CD4-positive, alpha-beta T cell (primary cell): ENCODE measurements at regions of chr17 and their contacts with region 1.

Region 1: DNA sequence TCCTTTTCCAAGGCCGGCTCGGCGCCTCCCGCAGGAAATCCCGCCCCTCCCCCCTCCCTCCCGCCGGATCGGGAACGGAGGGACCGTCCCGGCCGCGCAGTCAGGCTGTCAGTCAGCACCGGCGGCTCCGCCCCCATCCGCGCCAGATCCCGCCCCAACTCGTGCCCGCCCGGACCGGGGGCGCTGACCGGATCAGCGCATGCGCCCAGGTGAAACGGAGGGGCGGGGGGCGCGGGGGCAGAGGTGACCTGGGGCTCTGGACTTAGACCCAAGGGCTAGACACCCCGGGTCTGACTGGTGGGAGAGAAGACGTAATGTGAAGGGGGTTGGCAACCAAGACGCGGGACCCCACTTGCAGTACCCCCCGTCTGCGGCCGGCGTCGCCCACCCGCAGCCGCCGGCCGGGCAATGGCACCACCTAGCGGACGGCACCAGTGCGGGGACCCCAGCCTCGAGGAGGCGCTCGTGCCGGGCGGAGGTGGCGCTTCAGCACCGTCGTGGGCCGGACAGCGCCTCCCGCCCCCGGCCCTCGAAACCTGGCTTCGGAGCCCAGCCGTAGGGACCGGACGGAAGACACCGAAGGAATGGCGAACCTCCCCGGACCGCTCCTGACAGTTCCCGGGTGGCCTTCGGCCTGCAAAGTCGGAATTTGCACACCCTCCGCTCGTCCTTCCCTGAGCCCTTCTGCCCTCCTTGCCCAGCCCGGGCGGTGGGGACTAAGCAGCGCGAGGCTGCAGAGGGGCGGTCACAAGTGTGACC is at the start of gene CASKIN2:
- DNase-seq: peak; percentile 49 to 89 (median 64)
- ATAC-seq: peak; percentile 52
- H3K4me3 ChIP-seq: peak within 1 kb of the TSS; percentile 80
- H3K4me3 Mint-ChIP-seq: peak within 1 kb of the TSS; percentile 86
- H3K27ac ChIP-seq: no peak within 1 kb of the TSS
- H3K27ac Mint-ChIP-seq: peak within 1 kb of the TSS; percentile 47
- H3K4me1 ChIP-seq: peaks cover 44% of the 10 kb centered on the region
- H3K4me1 Mint-ChIP-seq: peaks cover 27% of the 10 kb centered on the region
- H3K27me3 ChIP-seq: peaks cover 9 to 10% of the 10 kb centered on the region in 2 experiments
- H3K27me3 Mint-ChIP-seq: no peaks in the 10 kb centered on the region
- CTCF ChIP-seq: peak; percentile 88
- total RNA-seq, gene CASKIN2: 0.17 to 0.25 TPM

Region 2: DNA sequence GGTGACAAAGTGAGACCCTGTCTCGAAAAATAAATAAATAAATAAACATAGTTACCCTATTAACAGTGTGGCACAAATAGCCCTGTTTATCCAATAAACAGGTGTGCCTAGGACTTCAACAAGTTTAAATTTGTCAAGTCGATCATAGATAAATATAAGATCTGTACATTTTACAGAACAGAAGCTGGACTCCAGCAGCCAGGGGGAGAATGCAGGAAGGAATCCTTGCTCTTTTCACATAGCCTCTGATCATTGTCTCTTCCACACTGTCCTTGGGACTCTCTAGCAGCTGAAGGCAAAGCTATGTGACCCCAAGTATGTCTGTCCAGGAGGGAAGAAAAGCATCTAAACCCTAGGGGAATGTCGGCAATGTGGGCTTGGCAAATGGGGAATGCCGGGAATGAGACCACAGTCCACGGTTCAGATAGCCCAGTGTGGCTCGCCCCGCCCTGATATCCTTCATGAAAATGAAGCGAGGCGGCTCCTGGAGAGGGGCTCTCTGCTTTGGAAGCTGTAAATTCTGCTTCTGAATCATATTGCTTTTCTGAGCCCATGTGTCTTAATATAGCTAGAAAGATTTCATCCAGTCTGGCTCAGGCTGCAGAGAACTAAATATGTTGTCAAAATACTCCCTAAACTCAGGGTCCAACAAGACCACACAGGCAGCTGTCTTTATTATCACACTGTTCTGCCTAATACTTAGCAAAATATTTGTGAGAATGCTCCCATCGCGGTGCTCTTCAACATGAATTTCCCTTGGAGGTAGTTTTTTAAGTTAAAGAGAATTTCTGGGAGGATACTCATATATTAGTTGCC is 85.3 kb before region 1 on chr17:
- CTCF ChIA-PET with region 1: interaction called, 3 read pairs
- POLR2A ChIA-PET with region 1: interaction called, 4 read pairs
- intact Hi-C with region 1: loop called (anchors 1 to 2 kb)
- DNase-seq: no peak
- ATAC-seq: no peak
- H3K4me3 ChIP-seq: no peak overlapping the region
- H3K4me3 Mint-ChIP-seq: no peak overlapping the region
- H3K27ac ChIP-seq: no peak overlapping the region
- H3K27ac Mint-ChIP-seq: no peak overlapping the region
- H3K4me1 ChIP-seq: peaks cover 12% of the 10 kb centered on the region
- H3K4me1 Mint-ChIP-seq: peaks cover 16% of the 10 kb centered on the region
- H3K27me3 ChIP-seq: no peaks in the 10 kb centered on the region
- H3K27me3 Mint-ChIP-seq: peaks cover 6% of the 10 kb centered on the region
- CTCF ChIP-seq: no peak

Region 3: DNA sequence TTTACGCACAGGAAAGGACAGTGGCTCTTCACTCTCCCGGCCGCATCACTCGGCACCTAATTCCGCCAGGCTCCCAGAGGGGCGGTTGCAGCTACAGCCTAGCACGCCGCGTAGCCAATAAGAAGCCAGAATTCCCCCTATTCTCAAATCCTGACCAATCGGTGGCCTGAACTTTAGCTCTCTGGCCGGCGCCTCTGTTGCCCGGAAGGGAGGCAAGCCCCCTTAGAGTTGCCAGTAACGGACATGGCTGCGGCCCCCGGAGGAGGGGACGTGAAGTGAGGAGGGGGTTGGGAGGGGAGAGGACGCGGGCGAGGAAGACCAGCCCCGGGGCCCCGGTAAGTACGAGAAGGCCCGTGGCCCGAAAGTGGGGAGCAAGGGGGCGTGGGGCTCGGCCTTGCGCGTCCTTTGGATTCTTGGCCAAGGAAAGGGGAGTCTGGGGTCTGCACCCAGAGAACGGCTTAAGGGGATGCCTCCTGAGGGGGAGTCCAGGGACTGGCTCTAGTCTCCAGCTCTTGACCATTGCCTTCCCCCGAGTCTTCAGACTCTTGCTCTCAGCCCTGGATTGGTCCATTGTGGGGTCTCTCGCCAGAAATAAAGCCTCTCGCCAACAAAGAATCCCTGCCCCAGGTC is 59.1 kb before region 1 on chr17 and contains the start of gene TMEM94:
- CTCF ChIA-PET with region 1: interaction called, 4 read pairs
- POLR2A ChIA-PET with region 1: interaction called, 34 read pairs
- intact Hi-C with region 1: loop called in 1 of 2 experiments (anchors 2 kb)
- DNase-seq: peak; percentile 79 to 97 (median 88)
- ATAC-seq: peak; percentile 96
- H3K4me3 ChIP-seq: peak within 1 kb of the TSS; percentile 70
- H3K4me3 Mint-ChIP-seq: peak within 1 kb of the TSS; percentile 100
- H3K27ac ChIP-seq: peak within 1 kb of the TSS; percentile 23 to 59
- H3K27ac Mint-ChIP-seq: peak within 1 kb of the TSS; percentile 91
- H3K4me1 ChIP-seq: peaks cover 17% of the 10 kb centered on the region
- H3K4me1 Mint-ChIP-seq: peaks cover 29% of the 10 kb centered on the region
- H3K27me3 ChIP-seq: no peaks in the 10 kb centered on the region
- H3K27me3 Mint-ChIP-seq: no peaks in the 10 kb centered on the region
- CTCF ChIP-seq: no peak
- total RNA-seq, gene TMEM94: 52.8 to 57.3 TPM

Region 4: GRCh38 chr17:75487351-75488070 is 28.2 kb before region 1 on chr17:
- CTCF ChIA-PET with region 1: no interaction called
- POLR2A ChIA-PET with region 1: interaction called, 23 read pairs
- intact Hi-C with region 1: no loop called
- DNase-seq: peak in 13 of 14 experiments; percentile 6 to 81 (median 51)
- ATAC-seq: peak; percentile 96
- H3K4me3 ChIP-seq: peak overlapping the region; percentile 20
- H3K4me3 Mint-ChIP-seq: peak overlapping the region; percentile 76
- H3K27ac ChIP-seq: peak overlapping the region; percentile 55 to 65
- H3K27ac Mint-ChIP-seq: peak overlapping the region; percentile 95
- H3K4me1 ChIP-seq: peaks cover 30% of the 10 kb centered on the region
- H3K4me1 Mint-ChIP-seq: peaks cover 26% of the 10 kb centered on the region
- H3K27me3 ChIP-seq: no peaks in the 10 kb centered on the region
- H3K27me3 Mint-ChIP-seq: no peaks in the 10 kb centered on the region
- CTCF ChIP-seq: no peak

Region 5: GRCh38 chr17:75535119-75535537 is 19.5 kb after region 1 on chr17:
- CTCF ChIA-PET with region 1: no interaction called
- POLR2A ChIA-PET with region 1: interaction called, 15 read pairs
- intact Hi-C with region 1: no loop called
- DNase-seq: peak in 13 of 14 experiments; percentile 31 to 87 (median 48)
- ATAC-seq: peak; percentile 96
- H3K4me3 ChIP-seq: peak overlapping the region; percentile 25
- H3K4me3 Mint-ChIP-seq: peak overlapping the region; percentile 38
- H3K27ac ChIP-seq: peak overlapping the region; percentile 35 to 71
- H3K27ac Mint-ChIP-seq: peak overlapping the region; percentile 87
- H3K4me1 ChIP-seq: peaks cover 25% of the 10 kb centered on the region
- H3K4me1 Mint-ChIP-seq: peaks cover 26% of the 10 kb centered on the region
- H3K27me3 ChIP-seq: no peaks in the 10 kb centered on the region
- H3K27me3 Mint-ChIP-seq: no peaks in the 10 kb centered on the region
- CTCF ChIP-seq: no peak

Region 6: DNA sequence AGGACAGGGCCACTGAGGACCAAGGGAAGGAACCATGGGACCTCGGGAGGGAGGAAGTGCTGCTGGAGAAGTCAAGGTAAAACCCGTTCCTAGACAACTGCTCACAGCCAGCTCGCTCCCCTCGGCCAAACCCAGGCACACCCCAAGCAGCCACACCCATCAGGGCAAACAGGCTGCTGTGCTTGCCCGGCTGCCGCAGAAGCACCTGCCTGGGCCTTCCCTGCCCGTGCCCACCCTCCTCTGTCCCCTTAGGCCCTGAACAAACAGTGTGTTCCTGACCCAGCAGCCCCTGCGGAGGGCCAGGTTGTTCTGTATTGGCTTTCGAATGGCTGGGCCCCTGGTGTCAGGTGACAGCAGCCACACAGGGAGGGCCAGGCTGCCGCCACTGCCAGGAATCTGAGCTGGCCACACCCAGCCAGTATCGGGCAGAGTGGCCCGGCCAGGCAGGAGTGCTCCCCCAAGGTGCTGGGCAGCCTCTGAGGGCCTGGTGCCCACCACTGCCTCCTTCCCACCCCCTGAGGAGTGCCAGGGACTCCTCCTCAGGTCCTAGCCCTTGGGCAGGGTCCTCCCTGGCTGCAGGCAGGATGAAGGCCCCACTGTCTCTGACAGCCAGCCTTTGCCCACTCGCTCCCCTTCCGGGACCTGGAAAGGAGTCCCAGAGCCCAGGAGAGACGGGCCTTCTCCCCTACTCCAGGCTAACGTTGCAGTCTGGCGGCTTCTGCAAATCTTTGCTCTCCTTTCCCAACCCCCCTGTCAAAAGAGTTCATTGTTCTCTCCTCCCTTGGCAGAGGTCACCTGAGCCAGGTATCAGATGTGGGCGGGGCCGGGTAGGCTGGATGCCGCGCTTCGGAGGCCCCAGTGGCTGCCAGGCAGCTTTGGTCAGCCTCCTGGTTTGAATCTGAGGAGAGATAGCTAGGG is 33.8 kb after region 1 on chr17:
- CTCF ChIA-PET with region 1: no interaction called
- POLR2A ChIA-PET with region 1: no interaction called
- intact Hi-C with region 1: no loop called
- DNase-seq: no peak
- ATAC-seq: no peak
- H3K4me3 ChIP-seq: no peak overlapping the region
- H3K4me3 Mint-ChIP-seq: no peak overlapping the region
- H3K27ac ChIP-seq: no peak overlapping the region
- H3K27ac Mint-ChIP-seq: no peak overlapping the region
- H3K4me1 ChIP-seq: peaks cover 2% of the 10 kb centered on the region
- H3K4me1 Mint-ChIP-seq: no peaks in the 10 kb centered on the region
- H3K27me3 ChIP-seq: no peaks in the 10 kb centered on the region
- H3K27me3 Mint-ChIP-seq: no peaks in the 10 kb centered on the region
- CTCF ChIP-seq: no peak

Region 7: DNA sequence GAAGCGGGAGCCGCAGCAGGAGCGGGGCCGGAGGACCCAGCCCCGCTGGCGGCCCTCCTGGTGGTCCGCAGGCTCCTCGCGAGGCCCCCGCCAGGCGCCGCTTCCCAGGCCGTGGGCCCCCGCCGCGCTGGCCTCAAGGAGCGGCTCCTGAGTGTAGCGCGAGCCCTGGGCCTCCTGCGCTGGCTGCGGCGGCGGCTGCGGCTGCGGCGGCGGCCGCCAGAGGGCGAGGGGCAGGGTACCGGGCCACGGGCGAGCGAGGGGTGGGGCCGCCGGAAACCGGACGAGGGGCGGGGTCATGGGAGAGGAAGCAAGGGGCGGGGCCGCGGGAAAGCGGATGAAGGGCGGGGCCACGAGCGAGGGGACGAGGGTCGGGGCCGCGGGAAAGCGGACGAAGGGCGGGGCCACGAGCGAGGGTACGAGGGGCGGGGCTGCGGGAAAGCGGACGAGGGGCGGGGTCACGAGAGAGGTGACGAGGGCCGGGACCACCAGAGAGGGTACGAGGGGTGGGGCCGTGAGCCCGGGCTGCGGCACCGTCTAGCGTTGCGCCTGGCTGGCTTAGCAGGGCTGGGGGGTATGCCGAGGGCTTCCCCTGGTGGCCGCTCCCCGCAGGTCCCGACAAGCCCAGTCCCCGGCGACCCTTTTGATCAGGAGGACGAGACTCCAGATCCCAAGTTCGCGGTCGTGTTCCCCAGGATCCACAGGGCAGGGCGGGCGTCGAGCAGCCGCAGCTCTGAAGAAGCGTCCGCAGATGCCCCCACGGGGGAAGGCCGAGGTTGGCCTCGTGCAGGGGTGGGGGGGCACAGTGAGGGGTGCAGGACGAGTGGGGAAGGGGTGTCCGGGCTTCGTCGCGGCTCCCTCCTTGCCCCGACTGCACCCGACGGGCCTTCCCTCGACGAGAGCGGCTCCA is 73.6 kb after region 1 on chr17:
- CTCF ChIA-PET with region 1: interaction called, 3 read pairs
- POLR2A ChIA-PET with region 1: interaction called, 10 read pairs
- intact Hi-C with region 1: loop called in 1 of 2 experiments (anchors 2 kb)
- DNase-seq: peak; percentile 91 to 99 (median 96)
- ATAC-seq: peak; percentile 88
- H3K4me3 ChIP-seq: peak overlapping the region; percentile 66
- H3K4me3 Mint-ChIP-seq: peak overlapping the region; percentile 81
- H3K27ac ChIP-seq: peak overlapping the region in 1 of 2 donors; percentile 56
- H3K27ac Mint-ChIP-seq: no peak overlapping the region
- H3K4me1 ChIP-seq: peaks cover 32% of the 10 kb centered on the region
- H3K4me1 Mint-ChIP-seq: peaks cover 11% of the 10 kb centered on the region
- H3K27me3 ChIP-seq: no peaks in the 10 kb centered on the region
- H3K27me3 Mint-ChIP-seq: no peaks in the 10 kb centered on the region
- CTCF ChIP-seq: peak; percentile 57